Activated naive CD8-positive, alpha-beta T cell treated with anti-CD3 and anti-CD28 coated beads, Interleukin-2, amount 10 ng/mL, durations not matched to agents 7 days and 5 days (primary cell): ENCODE measurements at regions of chr19 and their contacts with region 1.

Region 1: GRCh38 chr19:34364830-34365462 is at the start of gene GPI:
- DNase-seq: peak; percentile 82
- ATAC-seq: peak; percentile 88
- H3K4me3 Mint-ChIP-seq: peak within 1 kb of the TSS; percentile 95
- H3K27ac Mint-ChIP-seq: peak within 1 kb of the TSS; percentile 92
- H3K4me1 Mint-ChIP-seq: peaks cover 45% of the 10 kb centered on the region
- H3K27me3 Mint-ChIP-seq: no peaks in the 10 kb centered on the region
- total RNA-seq, gene GPI: 725 to 786 TPM

Region 2: DNA sequence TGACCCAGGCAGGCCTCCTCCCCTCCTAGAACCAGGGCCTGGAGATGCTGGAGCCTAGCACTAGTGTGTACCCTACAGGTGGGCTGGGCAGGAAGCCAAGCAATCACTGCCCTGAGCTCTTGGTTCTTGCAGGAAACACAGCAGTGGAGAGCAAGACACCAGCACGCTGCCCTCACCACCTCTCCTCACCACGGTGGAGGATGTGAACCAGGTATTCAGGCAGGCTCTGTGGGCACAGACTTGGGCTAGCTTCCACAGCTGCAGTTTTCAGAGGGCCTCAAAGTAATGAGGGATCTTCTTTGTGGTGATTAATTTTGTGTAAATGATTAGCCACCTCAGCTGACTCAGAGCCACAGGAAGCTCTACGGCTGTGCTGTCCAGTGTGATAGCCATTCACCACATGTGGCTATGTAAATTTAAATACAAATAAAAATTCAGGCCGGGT is 13.5 kb before region 1 on chr19:
- POLR2A ChIA-PET with region 1: interaction called, 29 read pairs
- DNase-seq: peak; percentile 59
- ATAC-seq: peak; percentile 19
- H3K4me3 Mint-ChIP-seq: peak overlapping the region; percentile 66
- H3K27ac Mint-ChIP-seq: peak overlapping the region; percentile 92
- H3K4me1 Mint-ChIP-seq: peaks cover 22% of the 10 kb centered on the region
- H3K27me3 Mint-ChIP-seq: no peaks in the 10 kb centered on the region

Region 3: DNA sequence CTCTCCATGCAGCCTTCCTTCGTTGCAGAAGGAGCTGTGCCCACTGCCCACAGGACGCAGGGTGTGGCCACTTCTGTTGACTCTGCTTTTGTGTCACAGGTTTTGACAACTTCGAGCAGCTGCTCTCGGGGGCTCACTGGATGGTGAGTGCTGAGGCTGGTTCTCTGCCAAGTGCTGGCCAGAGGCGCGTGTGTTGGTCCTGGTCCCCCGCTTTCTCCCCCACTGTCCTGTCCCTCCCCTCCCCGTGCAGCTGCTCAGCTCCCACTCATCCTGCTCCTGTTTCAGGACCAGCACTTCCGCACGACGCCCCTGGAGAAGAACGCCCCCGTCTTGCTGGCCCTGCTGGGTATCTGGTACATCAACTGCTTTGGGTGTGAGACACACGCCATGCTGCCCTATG is 28.7 kb after region 1 on chr19:
- POLR2A ChIA-PET with region 1: no interaction called
- DNase-seq: no peak
- ATAC-seq: no peak
- H3K4me3 Mint-ChIP-seq: no peak overlapping the region
- H3K27ac Mint-ChIP-seq: no peak overlapping the region
- H3K4me1 Mint-ChIP-seq: peaks cover 1% of the 10 kb centered on the region
- H3K27me3 Mint-ChIP-seq: no peaks in the 10 kb centered on the region